ENCODE measurements at regions of chr3 and their contacts with region 1.

Region 1: DNA sequence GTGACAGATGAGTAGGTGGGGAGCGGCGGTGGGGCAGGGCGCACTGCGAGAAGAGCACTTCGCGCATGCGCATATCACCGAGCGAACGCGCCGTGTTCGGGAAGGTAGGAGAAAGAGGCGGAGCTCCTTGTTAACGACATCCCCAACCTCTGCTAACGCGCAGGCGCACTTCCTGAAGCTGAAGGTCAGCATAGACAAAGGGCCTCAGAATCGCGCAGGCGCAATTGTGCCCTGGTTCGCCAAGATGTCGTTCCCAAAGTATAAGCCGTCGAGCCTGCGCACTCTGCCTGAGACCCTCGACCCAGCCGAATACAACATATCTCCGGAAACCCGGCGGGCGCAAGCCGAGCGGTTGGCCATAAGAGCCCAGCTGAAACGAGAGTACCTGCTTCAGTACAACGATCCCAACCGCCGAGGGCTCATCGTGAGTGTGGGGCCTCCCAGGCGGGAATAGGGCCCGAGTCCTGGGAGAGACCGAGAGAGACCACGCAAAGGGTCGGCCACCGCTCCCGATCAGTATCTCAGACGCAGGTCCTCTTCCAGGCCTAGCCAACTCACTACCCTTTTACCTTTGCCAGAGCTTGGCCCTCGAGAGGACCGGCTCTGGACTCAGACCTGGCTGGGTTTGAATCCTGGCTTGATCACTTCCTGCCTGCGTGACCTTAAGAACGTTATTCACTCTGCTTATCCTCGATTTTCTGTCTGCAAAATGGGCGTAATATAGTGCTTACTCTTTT is at the start of gene NDUFB4:
- DNase-seq: peak; percentile 97
- H3K4me3 Mint-ChIP-seq: peak within 1 kb of the TSS; percentile 94
- H3K27ac Mint-ChIP-seq: peak within 1 kb of the TSS; percentile 96
- H3K4me1 Mint-ChIP-seq: peaks cover 9% of the 10 kb centered on the region
- H3K27me3 Mint-ChIP-seq: peaks cover 6% of the 10 kb centered on the region

Region 2: GRCh38 chr3:120558771-120559241 is 37.5 kb before region 1 on chr3:
- CTCF ChIA-PET with region 1: interaction called, 15 read pairs
- DNase-seq: peak; percentile 91
- H3K4me3 Mint-ChIP-seq: peak overlapping the region; percentile 65
- H3K27ac Mint-ChIP-seq: no peak overlapping the region
- H3K4me1 Mint-ChIP-seq: peaks cover 17% of the 10 kb centered on the region
- H3K27me3 Mint-ChIP-seq: peaks cover 12% of the 10 kb centered on the region

Region 3: DNA sequence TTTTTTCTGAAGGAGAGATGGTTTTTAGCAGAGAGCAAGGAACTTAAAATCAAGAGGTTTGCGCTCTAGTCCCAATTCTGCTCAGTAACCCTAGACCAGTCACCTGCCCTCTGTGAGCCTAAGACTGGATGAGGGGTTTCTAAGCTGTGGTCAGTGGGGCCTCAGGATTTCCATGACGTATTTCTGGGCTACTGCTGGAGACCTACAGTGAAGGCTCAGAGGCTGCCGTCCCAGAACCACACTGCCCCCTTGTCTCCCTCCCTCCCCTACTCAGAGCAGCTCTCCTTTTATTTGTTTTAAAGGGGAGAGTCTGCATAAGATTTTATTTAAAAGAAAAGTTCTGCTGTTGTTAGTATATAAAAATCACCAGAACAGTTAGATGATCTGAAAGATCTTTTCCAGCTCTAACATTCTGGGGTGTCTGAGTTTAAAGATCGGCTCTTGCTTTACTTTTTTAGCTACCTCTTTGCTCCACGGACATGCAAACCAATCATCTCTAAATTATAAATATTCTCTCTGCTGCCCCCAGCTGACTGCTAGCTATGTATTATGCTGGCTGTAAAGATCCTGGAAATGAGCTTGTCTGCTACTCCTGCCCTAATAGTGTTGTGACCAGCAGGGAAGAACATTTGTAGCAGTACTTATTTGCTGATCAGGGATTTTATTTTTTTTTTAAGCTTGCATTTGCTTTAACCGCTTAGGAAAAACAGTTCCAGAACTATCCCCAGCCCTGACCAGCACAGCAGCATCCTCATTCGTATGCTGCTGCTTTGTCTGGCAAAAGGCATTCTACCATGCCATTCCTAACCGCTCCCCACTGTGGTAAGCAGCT is 28.7 kb before region 1 on chr3:
- CTCF ChIA-PET with region 1: interaction called, 13 read pairs
- DNase-seq: no peak
- H3K4me3 Mint-ChIP-seq: no peak overlapping the region
- H3K27ac Mint-ChIP-seq: no peak overlapping the region
- H3K4me1 Mint-ChIP-seq: no peaks in the 10 kb centered on the region
- H3K27me3 Mint-ChIP-seq: peaks cover 4% of the 10 kb centered on the region

Measured in activated naive CD4-positive, alpha-beta T cell treated with anti-CD3 and anti-CD28 coated beads, Interleukin-2, amount 10 ng/mL, durations not matched to agents 7 days and 5 days (primary cell).